ENCODE measurements at regions of chr7 and their contacts with region 1.

Region 1: DNA sequence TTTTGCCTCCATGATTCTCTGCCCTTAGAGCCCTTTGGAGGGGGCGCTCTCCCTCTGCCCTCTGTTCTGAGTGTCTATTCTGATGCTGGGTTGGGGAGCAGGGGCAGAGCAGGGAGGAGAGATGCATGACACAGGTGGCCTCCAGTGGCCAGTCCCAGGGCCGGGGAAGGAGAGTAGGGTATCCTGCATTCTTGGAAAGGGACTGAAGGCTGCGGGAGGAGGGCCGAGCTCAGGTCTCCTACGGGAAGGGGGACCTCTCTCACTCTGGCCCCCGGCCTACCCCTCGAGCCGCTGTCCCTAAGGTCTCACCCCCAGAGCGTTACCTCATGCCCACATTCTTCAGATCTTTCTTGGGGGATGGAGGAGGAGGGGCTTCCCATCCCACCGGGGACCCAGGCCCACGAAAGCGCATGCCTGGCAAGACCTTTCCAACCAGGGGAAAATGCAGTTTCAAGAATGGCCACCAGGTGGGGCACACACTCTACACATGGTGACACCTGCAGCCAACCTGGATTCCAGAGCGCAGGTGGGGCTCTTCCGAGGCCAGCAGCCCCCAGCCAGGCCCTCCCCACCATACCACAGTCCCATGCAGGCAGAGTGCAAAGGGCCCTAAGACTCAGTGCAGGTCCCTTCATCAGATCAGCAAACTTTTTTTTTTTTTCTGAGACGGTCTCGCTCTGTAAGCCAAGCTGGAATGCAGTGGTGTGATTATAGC is 86.4 kb downstream of the MYL10 start:
- DNase-seq: peak; percentile 85
- ATAC-seq: no peak
- H3K4me3 Mint-ChIP-seq: no peak overlapping the region
- H3K27ac Mint-ChIP-seq: no peak overlapping the region
- H3K4me1 Mint-ChIP-seq: no peaks in the 10 kb centered on the region
- H3K27me3 Mint-ChIP-seq: peaks cover 3% of the 10 kb centered on the region

Region 2: GRCh38 chr7:101420436-101420835 is 122.2 kb before region 1 on chr7:
- CTCF ChIA-PET with region 1: no interaction called
- POLR2A ChIA-PET with region 1: no interaction called
- intact Hi-C with region 1: no loop called
- DNase-seq: peak; percentile 24
- ATAC-seq: no peak
- H3K4me3 Mint-ChIP-seq: no peak overlapping the region
- H3K27ac Mint-ChIP-seq: no peak overlapping the region
- H3K4me1 Mint-ChIP-seq: no peaks in the 10 kb centered on the region
- H3K27me3 Mint-ChIP-seq: peaks cover 4% of the 10 kb centered on the region

Region 3: DNA sequence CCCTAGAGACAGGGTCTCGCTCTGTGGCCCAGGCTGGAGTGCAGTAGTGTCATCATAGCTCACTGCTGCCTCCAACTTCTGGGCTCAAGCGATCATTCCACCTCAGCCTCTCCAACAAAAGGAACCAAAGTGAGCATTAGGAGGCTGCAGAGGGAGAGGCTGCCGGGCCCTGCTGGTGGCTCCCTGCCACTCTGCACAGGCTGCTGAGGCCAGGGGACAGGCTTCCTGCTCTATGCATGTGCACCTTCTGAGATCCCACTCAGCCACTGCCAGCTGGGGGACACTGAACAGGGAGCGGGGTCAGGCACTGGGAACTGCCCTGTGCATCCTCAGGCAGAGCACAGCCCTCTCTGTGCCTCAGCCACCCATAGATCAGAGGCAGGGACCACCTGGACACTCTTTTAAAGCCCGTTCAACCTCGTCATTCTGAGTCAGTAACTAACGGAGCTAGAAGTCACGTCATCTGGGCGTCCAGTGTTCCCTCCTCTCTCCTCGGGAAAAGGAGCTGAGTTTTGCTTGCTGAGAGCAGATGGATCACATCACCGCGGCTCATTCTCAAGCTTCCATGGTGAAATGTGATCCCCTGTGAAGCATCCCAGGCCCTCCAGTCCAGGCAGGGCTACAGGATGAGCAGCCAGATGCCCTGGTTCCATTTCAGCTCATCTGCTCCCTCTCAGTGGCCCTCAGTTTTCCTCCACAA is 23.2 kb before region 1 on chr7:
- CTCF ChIA-PET with region 1: no interaction called
- POLR2A ChIA-PET with region 1: no interaction called
- intact Hi-C with region 1: no loop called
- DNase-seq: no peak
- ATAC-seq: no peak
- H3K4me3 Mint-ChIP-seq: no peak overlapping the region
- H3K27ac Mint-ChIP-seq: no peak overlapping the region
- H3K4me1 Mint-ChIP-seq: no peaks in the 10 kb centered on the region
- H3K27me3 Mint-ChIP-seq: no peaks in the 10 kb centered on the region

Region 4: GRCh38 chr7:101586078-101586905 is 43.6 kb after region 1 on chr7:
- CTCF ChIA-PET with region 1: no interaction called
- POLR2A ChIA-PET with region 1: no interaction called
- intact Hi-C with region 1: no loop called
- DNase-seq: no peak
- ATAC-seq: no peak
- H3K4me3 Mint-ChIP-seq: no peak overlapping the region
- H3K27ac Mint-ChIP-seq: no peak overlapping the region
- H3K4me1 Mint-ChIP-seq: no peaks in the 10 kb centered on the region
- H3K27me3 Mint-ChIP-seq: no peaks in the 10 kb centered on the region

Region 5: GRCh38 chr7:102236592-102237287 is 694.1 kb after region 1 on chr7:
- CTCF ChIA-PET with region 1: interaction called, 4 read pairs
- POLR2A ChIA-PET with region 1: no interaction called
- intact Hi-C with region 1: loop called in 1 of 2 experiments (anchors 1 kb)
- DNase-seq: peak; percentile 73
- ATAC-seq: peak; percentile 77
- H3K4me3 Mint-ChIP-seq: no peak overlapping the region
- H3K27ac Mint-ChIP-seq: no peak overlapping the region
- H3K4me1 Mint-ChIP-seq: no peaks in the 10 kb centered on the region
- H3K27me3 Mint-ChIP-seq: no peaks in the 10 kb centered on the region

Region 6: GRCh38 chr7:102272075-102272917 is 729.6 kb after region 1 on chr7:
- CTCF ChIA-PET with region 1: interaction called, 5 read pairs
- POLR2A ChIA-PET with region 1: no interaction called
- intact Hi-C with region 1: loop called (anchors 1 kb)
- DNase-seq: peak; percentile 88
- ATAC-seq: peak; percentile 90
- H3K4me3 Mint-ChIP-seq: no peak overlapping the region
- H3K27ac Mint-ChIP-seq: no peak overlapping the region
- H3K4me1 Mint-ChIP-seq: peaks cover 2% of the 10 kb centered on the region
- H3K27me3 Mint-ChIP-seq: no peaks in the 10 kb centered on the region